SK-N-SH (cell line): ENCODE measurements at regions of chrX and their contacts with region 1.

Region 1: GRCh38 chrX:129637217-129638109 is 17.3 kb downstream of the APLN start:
- DNase-seq: peak; percentile 72
- H3K4me3 ChIP-seq: no peak overlapping the region
- H3K27ac ChIP-seq: no peak overlapping the region
- H3K4me1 ChIP-seq: peaks cover 4 to 14% of the 10 kb centered on the region in 2 experiments; a peak in 2 of 4 replicates
- H3K27me3 ChIP-seq: peaks cover 17% of the 10 kb centered on the region; the same call in 1 of the 2 replicates
- CTCF ChIP-seq: peak; percentile 98
- EP300 ChIP-seq: no peak
- RAD21 ChIP-seq: peak; percentile 89

Region 2: GRCh38 chrX:129585702-129586101 is 51.8 kb before region 1 on chrX:
- CTCF ChIA-PET with region 1: no interaction called
- POLR2A ChIA-PET with region 1: no interaction called
- DNase-seq: no peak
- H3K4me3 ChIP-seq: no peak overlapping the region
- H3K27ac ChIP-seq: no peak overlapping the region
- H3K4me1 ChIP-seq: peaks cover 0 to 5% of the 10 kb centered on the region in 2 experiments; a peak in 1 of 4 replicates
- H3K27me3 ChIP-seq: no peaks in the 10 kb centered on the region
- CTCF ChIP-seq: no peak
- EP300 ChIP-seq: no peak
- RAD21 ChIP-seq: no peak

Region 3: DNA sequence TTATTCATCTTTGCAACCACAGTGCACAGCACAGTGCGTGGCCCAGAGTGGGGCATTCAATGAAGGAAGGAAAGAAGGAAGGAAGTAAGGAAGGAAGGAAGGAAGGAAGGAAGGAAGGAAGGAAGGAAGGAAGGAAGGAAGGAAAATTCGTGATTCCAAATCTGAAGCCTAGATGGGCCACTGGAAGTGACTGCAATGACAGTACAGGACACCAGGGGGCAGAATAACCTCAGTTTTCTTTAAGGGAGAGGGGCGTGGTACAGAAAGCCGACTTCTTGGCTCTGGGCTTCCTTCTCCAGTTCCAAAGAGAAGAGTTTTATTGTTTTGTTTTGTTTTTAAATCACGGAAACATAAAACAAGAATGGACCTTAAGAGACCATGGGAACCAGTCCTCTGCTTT is 30.5 kb before region 1 on chrX:
- CTCF ChIA-PET with region 1: interaction called, 21 read pairs
- POLR2A ChIA-PET with region 1: no interaction called
- DNase-seq: peak; percentile 72
- H3K4me3 ChIP-seq: no peak overlapping the region
- H3K27ac ChIP-seq: no peak overlapping the region
- H3K4me1 ChIP-seq: peaks cover 0 to 3% of the 10 kb centered on the region in 2 experiments; a peak in 1 of 4 replicates
- H3K27me3 ChIP-seq: no peaks in the 10 kb centered on the region; the same call in 1 of the 2 replicates
- CTCF ChIP-seq: peak; percentile 83
- EP300 ChIP-seq: no peak
- RAD21 ChIP-seq: peak; percentile 91

Region 4: GRCh38 chrX:129622757-129623341 is 14.6 kb before region 1 on chrX:
- CTCF ChIA-PET with region 1: interaction called, 25 read pairs
- POLR2A ChIA-PET with region 1: no interaction called
- DNase-seq: no peak
- H3K4me3 ChIP-seq: no peak overlapping the region
- H3K27ac ChIP-seq: no peak overlapping the region
- H3K4me1 ChIP-seq: no peaks in the 10 kb centered on the region
- H3K27me3 ChIP-seq: peaks cover 6% of the 10 kb centered on the region; the same call in 1 of the 2 replicates
- CTCF ChIP-seq: no peak
- EP300 ChIP-seq: no peak
- RAD21 ChIP-seq: no peak

Region 5: GRCh38 chrX:129726307-129727111 is 89.0 kb after region 1 on chrX:
- CTCF ChIA-PET with region 1: interaction called, 119 read pairs
- POLR2A ChIA-PET with region 1: no interaction called
- DNase-seq: peak; percentile 51
- H3K4me3 ChIP-seq: no peak overlapping the region
- H3K27ac ChIP-seq: no peak overlapping the region
- H3K4me1 ChIP-seq: no peaks in the 10 kb centered on the region; a peak in 1 of 4 replicates
- H3K27me3 ChIP-seq: peaks cover 6% of the 10 kb centered on the region
- CTCF ChIP-seq: peak; percentile 89
- EP300 ChIP-seq: no peak
- RAD21 ChIP-seq: peak; percentile 88

Region 6: GRCh38 chrX:129772796-129773431 is 135.5 kb after region 1 on chrX:
- CTCF ChIA-PET with region 1: interaction called, 16 read pairs
- POLR2A ChIA-PET with region 1: no interaction called
- DNase-seq: no peak
- H3K4me3 ChIP-seq: no peak overlapping the region
- H3K27ac ChIP-seq: no peak overlapping the region
- H3K4me1 ChIP-seq: no peaks in the 10 kb centered on the region
- H3K27me3 ChIP-seq: peaks cover 20% of the 10 kb centered on the region; the same call in 1 of the 2 replicates
- CTCF ChIP-seq: no peak
- EP300 ChIP-seq: no peak
- RAD21 ChIP-seq: no peak

Region 7: DNA sequence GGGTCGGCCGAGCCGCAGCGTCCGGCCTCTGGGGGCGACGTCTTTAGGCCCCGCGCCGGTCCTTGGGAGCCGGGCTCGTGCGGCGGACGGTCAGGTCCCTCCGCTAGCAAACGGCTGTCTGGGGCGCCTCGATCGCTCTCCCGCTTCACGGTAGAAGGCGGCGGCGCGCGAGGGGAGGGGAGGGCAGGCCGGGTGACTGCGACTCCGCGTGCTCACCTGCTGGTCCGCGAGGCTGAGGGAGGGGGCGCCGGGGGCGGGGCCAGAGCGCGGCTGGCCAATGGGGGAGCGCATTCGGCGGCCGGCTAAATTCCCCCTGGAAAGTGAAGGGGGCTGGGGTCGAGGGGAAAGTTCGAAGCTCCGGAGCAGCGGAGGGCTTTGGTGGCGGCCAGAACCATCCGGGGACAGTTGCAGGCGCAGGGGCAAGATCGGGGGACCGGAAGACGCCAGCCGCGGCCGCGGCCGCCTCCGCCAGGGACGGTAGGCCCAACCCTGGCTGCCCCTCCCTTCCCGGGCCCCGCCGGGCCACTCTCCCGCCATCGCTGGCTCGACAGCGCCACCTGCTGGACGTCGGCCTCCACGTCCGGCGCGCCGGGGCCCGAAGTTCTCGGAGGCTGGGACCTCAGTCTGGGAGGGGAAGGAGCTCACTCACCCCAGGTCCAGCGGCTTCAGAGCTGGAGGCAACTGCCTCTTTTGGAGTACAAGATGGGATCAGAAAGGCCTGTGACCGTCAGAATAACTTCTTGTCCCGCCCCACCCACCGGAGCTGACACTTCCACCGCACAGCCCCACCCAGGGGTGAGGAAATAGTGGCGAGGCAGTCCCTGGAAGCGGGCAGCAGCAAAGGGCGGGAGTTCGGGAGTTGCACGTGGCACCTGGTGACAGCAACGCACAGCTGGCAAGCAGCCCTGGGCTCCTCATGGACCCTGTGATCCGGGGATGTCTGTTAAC is 422.9 kb after region 1 on chrX:
- CTCF ChIA-PET with region 1: interaction called, 12 read pairs
- POLR2A ChIA-PET with region 1: no interaction called
- DNase-seq: peak; percentile 98
- H3K4me3 ChIP-seq: peak overlapping the region; percentile 46 to 60
- H3K27ac ChIP-seq: no peak overlapping the region
- H3K4me1 ChIP-seq: peaks cover 0 to 4% of the 10 kb centered on the region in 2 experiments; a peak in 1 of 4 replicates
- H3K27me3 ChIP-seq: no peaks in the 10 kb centered on the region; the same call in 1 of the 2 replicates
- CTCF ChIP-seq: peak; percentile 88
- EP300 ChIP-seq: no peak
- RAD21 ChIP-seq: peak; percentile 79